ENCODE measurements at regions of chr20 and their contacts with region 1.

Region 1: DNA sequence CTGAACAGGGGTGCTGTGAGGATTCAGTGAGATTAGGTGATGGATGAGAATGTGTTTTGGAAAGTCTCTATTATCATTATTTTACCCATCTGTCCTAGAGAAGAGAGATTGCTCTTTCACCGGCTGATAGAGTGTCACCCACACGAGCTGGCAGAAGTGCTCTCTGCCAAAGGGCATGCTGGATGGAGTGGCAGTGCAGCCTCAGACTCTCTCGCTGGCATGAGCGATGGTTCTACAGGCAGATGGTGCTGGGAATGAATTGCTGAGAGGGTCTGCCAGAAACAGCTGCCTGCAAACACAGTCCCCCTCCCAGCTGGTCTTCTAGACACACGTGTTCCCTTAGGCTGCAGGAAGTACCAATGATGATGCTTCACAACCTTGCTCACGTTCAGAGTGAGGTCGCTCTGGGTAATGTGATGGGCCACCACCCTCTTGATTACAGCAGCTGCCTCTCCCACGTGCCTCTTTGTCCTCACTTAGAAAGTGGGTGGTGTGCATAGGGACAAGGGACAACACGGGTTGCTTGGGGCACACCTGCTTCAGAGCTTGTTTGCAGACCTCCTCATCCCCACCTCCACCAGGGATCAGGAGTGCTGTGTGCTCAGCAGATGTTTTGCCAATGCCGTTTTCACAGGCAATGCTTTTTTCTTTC is 84.7 kb downstream of the FOXA2 start:
- DNase-seq: no peak
- ATAC-seq: no peak
- H3K4me3 ChIP-seq: no peak overlapping the region
- H3K27ac ChIP-seq: no peak overlapping the region
- H3K4me1 ChIP-seq: no peaks in the 10 kb centered on the region
- H3K27me3 ChIP-seq: peaks cover 0 to 37% (median 8%) of the 10 kb centered on the region in 7 donors
- CTCF ChIP-seq: no peak

Region 2: DNA sequence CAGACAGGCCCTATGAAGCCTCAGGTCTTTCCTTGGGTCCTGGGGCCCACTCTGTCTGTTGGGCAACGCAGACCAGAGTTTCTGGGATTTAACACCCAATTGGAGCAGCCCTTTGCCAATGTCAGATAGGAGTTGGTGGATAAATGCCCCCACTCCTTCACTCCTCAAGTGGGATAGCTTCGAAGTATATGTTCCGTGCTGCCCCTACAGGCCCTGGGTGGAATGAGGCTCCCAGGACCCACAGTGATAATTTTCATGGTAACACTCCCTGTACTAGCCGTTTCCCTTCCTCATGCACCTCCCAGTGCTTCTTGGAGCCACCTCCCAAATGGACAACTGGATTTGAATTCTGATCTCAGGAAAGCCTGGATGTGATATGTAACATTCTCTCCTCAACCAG is 60.7 kb before region 1 on chr20:
- intact Hi-C with region 1: no loop called
- DNase-seq: no peak
- ATAC-seq: no peak
- H3K4me3 ChIP-seq: no peak overlapping the region
- H3K27ac ChIP-seq: no peak overlapping the region
- H3K4me1 ChIP-seq: no peaks in the 10 kb centered on the region
- H3K27me3 ChIP-seq: peaks cover 0 to 33% (median 4%) of the 10 kb centered on the region in 7 donors
- CTCF ChIP-seq: no peak

Region 3: GRCh38 chr20:24194137-24194536 is 1694.5 kb after region 1 on chr20:
- intact Hi-C with region 1: loop called in 1 of 10 experiments (anchors 10 kb)
- DNase-seq: no peak
- ATAC-seq: no peak
- H3K4me3 ChIP-seq: no peak overlapping the region
- H3K27ac ChIP-seq: no peak overlapping the region
- H3K4me1 ChIP-seq: no peaks in the 10 kb centered on the region
- H3K27me3 ChIP-seq: peaks cover 0 to 4% (median 0%) of the 10 kb centered on the region in 7 donors
- CTCF ChIP-seq: no peak

Measured in heart right ventricle (tissue), 16 donors.